B cell (primary cell): ENCODE measurements at regions of chr6 and their contacts with region 1.

Region 1: GRCh38 chr6:31197559-31198305 is 27.2 kb upstream of the POU5F1 start:
- DNase-seq: peak; percentile 95
- ATAC-seq: peak; percentile 77
- H3K4me3 ChIP-seq: peak overlapping the region; percentile 70 to 99 (median 90)
- H3K4me3 Mint-ChIP-seq: peak overlapping the region; percentile 82
- H3K27ac ChIP-seq: peak overlapping the region; percentile 97 to 100
- H3K27ac Mint-ChIP-seq: peak overlapping the region; percentile 100
- H3K4me1 ChIP-seq: peaks cover 11 to 47% of the 10 kb centered on the region in 2 donors
- H3K4me1 Mint-ChIP-seq: peaks cover 50% of the 10 kb centered on the region
- H3K27me3 ChIP-seq: no peaks in the 10 kb centered on the region
- H3K27me3 Mint-ChIP-seq: no peaks in the 10 kb centered on the region
- CTCF ChIP-seq: no peak

Region 2: DNA sequence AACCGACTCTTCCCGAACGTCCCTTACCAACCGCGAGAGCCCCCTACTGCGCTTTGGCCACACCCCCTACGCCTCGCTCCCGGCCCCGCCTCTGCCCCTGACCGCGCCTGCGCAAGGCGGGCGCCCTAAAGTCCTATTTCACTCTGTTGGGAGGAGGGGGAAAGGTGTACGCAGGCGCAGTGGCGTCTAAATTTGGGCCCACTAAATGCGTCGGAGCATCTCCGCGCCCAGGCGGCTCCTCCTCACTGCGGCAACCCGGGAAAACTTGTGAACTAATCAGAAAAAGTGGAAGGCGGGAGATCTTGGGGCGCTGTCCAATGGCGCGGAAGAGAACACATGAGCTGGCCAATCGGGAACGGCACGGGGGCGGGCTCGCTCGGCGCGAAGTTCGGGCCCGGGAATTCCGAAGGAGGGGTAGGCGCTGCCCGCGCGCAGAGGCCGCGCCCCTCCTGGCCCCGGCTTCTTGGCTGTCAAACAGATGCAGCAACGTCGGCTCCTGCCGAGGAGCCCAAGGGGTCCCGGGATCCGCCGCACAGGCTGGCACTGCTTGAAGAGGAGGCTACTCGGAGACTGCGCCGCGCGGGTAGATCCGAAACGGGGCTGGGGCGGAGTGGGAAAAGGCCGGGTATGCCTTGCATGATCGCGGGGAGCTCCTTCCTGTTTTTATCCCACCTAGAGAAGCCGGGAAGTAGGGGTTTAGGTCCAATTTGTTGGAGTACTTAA is 39.4 kb before region 1 on chr6 and contains the start of gene TCF19:
- CTCF ChIA-PET with region 1: interaction called, 9 read pairs
- POLR2A ChIA-PET with region 1: interaction called, 4 read pairs
- intact Hi-C with region 1: loop called (anchors 1 kb)
- DNase-seq: peak; percentile 99
- ATAC-seq: peak; percentile 91
- H3K4me3 ChIP-seq: peak within 1 kb of the TSS; percentile 1 to 90 (median 88)
- H3K4me3 Mint-ChIP-seq: peak within 1 kb of the TSS; percentile 87
- H3K27ac ChIP-seq: peak within 1 kb of the TSS; percentile 53 to 77
- H3K27ac Mint-ChIP-seq: peak within 1 kb of the TSS; percentile 73
- H3K4me1 ChIP-seq: peaks cover 13 to 22% of the 10 kb centered on the region in 2 donors
- H3K4me1 Mint-ChIP-seq: peaks cover 32% of the 10 kb centered on the region
- H3K27me3 ChIP-seq: no peaks in the 10 kb centered on the region
- H3K27me3 Mint-ChIP-seq: no peaks in the 10 kb centered on the region
- CTCF ChIP-seq: no peak
- total RNA-seq, gene TCF19: 9.8 and 10.4 TPM in 2 replicates

Region 3: DNA sequence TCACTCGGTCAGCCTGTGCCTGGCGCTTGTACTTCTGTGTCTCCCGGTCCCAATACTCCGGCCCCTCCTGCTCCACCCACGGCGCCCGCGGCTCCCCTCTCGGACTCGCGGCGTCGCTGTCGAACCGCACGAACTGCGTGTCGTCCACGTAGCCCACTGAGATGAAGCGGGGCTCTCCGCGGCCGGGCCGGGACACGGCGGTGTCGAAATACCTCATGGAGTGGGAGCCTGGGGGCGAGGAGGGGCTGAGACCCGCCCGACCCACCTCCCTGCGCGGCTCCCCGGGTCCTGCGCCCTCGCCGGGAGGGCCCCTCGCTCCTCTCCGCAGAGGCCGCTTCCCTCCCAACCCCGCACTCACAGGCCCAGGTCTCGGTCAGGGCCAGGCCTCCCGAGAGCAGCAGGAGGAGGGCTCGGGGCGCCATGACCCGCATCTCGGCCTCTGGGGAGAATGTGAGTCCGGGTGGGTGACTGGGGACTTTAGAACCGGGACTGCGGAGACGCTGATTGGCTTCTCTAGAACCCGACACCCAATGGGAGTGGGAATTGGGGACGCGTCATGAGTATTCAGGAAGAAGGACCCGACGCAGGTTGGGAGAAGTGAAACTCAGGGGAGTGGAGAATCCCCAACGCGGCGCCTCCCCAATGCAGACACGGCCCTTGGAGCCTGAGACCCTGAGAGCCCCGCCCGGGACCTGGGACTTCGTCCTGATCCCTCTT is 74.1 kb after region 1 on chr6 and contains the start of gene HLA-C:
- CTCF ChIA-PET with region 1: interaction called, 15 read pairs
- POLR2A ChIA-PET with region 1: interaction called, 13 read pairs
- intact Hi-C with region 1: loop called (anchors 1 kb)
- DNase-seq: peak; percentile 98
- ATAC-seq: peak; percentile 88
- H3K4me3 ChIP-seq: peak within 1 kb of the TSS; percentile 72 to 94 (median 87)
- H3K4me3 Mint-ChIP-seq: peak within 1 kb of the TSS; percentile 98
- H3K27ac ChIP-seq: peak within 1 kb of the TSS; percentile 97 to 98
- H3K27ac Mint-ChIP-seq: peak within 1 kb of the TSS; percentile 100
- H3K4me1 ChIP-seq: peaks cover 33 to 46% of the 10 kb centered on the region in 2 donors
- H3K4me1 Mint-ChIP-seq: peaks cover 64% of the 10 kb centered on the region
- H3K27me3 ChIP-seq: no peaks in the 10 kb centered on the region
- H3K27me3 Mint-ChIP-seq: no peaks in the 10 kb centered on the region
- CTCF ChIP-seq: no peak
- total RNA-seq, gene HLA-C: 972 and 998 TPM in 2 replicates

Region 4: GRCh38 chr6:31403283-31403989 is 205.7 kb after region 1 on chr6 and contains the start of gene MICA:
- CTCF ChIA-PET with region 1: interaction called, 4 read pairs
- POLR2A ChIA-PET with region 1: no interaction called
- intact Hi-C with region 1: loop called (anchors 1 kb)
- DNase-seq: peak; percentile 75
- ATAC-seq: peak; percentile 64
- H3K4me3 ChIP-seq: peak within 1 kb of the TSS; percentile 12 to 72 (median 64)
- H3K4me3 Mint-ChIP-seq: peak within 1 kb of the TSS; percentile 90
- H3K27ac ChIP-seq: peak within 1 kb of the TSS; percentile 12 to 82
- H3K27ac Mint-ChIP-seq: peak within 1 kb of the TSS; percentile 75
- H3K4me1 ChIP-seq: peaks cover 30 to 44% of the 10 kb centered on the region in 2 donors
- H3K4me1 Mint-ChIP-seq: peaks cover 64% of the 10 kb centered on the region
- H3K27me3 ChIP-seq: no peaks in the 10 kb centered on the region
- H3K27me3 Mint-ChIP-seq: no peaks in the 10 kb centered on the region
- CTCF ChIP-seq: no peak
- total RNA-seq, gene MICA: 13.9 and 17.1 TPM in 2 replicates